Heart right ventricle (tissue), 16 donors: ENCODE measurements at regions of chr13 and their contacts with region 1.

Region 1: GRCh38 chr13:107205303-107206104 is 637.6 kb upstream of the ARGLU1 start:
- DNase-seq: peak; percentile 59 to 70
- ATAC-seq: peak in 7 of 8 donors; percentile 31 to 72 (median 65)
- H3K4me3 ChIP-seq: no peak overlapping the region
- H3K27ac ChIP-seq: peak overlapping the region in 4 of 10 donors; percentile 13 to 90 (median 28)
- H3K4me1 ChIP-seq: peaks cover 0 to 79% (median 32%) of the 10 kb centered on the region in 9 donors
- H3K27me3 ChIP-seq: peaks cover 0 to 7% (median 0%) of the 10 kb centered on the region in 7 donors
- CTCF ChIP-seq: peak; percentile 93 to 100 (median 98)

Region 2: DNA sequence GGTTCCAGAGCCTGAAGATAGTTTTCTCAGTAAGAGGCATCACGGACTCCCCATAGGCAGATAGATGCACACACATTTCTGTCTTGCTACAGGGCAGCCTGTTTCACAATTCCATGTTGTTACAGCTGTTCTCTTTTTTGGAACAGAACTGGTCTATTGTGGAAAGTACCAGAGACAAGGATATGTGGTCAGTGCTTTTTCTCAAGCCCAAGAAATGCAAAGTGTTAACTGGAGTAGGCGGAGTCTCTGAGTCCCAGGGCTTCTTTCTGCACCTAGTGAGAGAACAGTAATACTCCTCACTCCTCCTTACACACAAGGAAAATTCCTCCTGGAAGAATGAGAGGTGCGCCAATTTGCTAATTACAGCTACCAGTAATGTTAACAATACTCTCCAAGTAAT is 496.0 kb before region 1 on chr13:
- intact Hi-C with region 1: loop called in 1 of 10 experiments (anchors 10 kb)
- DNase-seq: peak in 1 of 2 donors; percentile 54
- ATAC-seq: peak; percentile 70 to 92 (median 88)
- H3K4me3 ChIP-seq: peak overlapping the region in 8 of 10 donors; percentile 19 to 50 (median 40)
- H3K27ac ChIP-seq: peak overlapping the region; percentile 65 to 90 (median 82)
- H3K4me1 ChIP-seq: peaks cover 0 to 67% (median 17%) of the 10 kb centered on the region in 9 donors
- H3K27me3 ChIP-seq: no peaks in the 10 kb centered on the region
- CTCF ChIP-seq: no peak

Region 3: GRCh38 chr13:107057028-107057631 is 148.4 kb before region 1 on chr13:
- intact Hi-C with region 1: no loop called
- DNase-seq: no peak
- ATAC-seq: no peak
- H3K4me3 ChIP-seq: no peak overlapping the region
- H3K27ac ChIP-seq: no peak overlapping the region
- H3K4me1 ChIP-seq: no peaks in the 10 kb centered on the region
- H3K27me3 ChIP-seq: no peaks in the 10 kb centered on the region
- CTCF ChIP-seq: no peak

Region 4: GRCh38 chr13:107650081-107650701 is 444.7 kb after region 1 on chr13:
- intact Hi-C with region 1: loop called in 9 of 10 experiments (anchors 2 to 10 kb)
- DNase-seq: peak; percentile 19 to 43
- ATAC-seq: peak in 2 of 8 donors; percentile 40 to 41
- H3K4me3 ChIP-seq: no peak overlapping the region
- H3K27ac ChIP-seq: no peak overlapping the region
- H3K4me1 ChIP-seq: no peaks in the 10 kb centered on the region
- H3K27me3 ChIP-seq: peaks cover 0 to 12% (median 0%) of the 10 kb centered on the region in 7 donors
- CTCF ChIP-seq: peak; percentile 34 to 82 (median 64)

Region 5: GRCh38 chr13:108155185-108156106 is 949.9 kb after region 1 on chr13:
- intact Hi-C with region 1: loop called in 8 of 10 experiments (anchors 2 to 5 kb)
- DNase-seq: peak; percentile 39 to 50
- ATAC-seq: no peak
- H3K4me3 ChIP-seq: no peak overlapping the region
- H3K27ac ChIP-seq: no peak overlapping the region
- H3K4me1 ChIP-seq: peaks cover 0 to 3% (median 0%) of the 10 kb centered on the region in 9 donors
- H3K27me3 ChIP-seq: no peaks in the 10 kb centered on the region
- CTCF ChIP-seq: peak; percentile 77 to 93 (median 89)